HepG2 (cell line): ENCODE measurements at regions of chr12 and their contacts with region 1.

Region 1: DNA sequence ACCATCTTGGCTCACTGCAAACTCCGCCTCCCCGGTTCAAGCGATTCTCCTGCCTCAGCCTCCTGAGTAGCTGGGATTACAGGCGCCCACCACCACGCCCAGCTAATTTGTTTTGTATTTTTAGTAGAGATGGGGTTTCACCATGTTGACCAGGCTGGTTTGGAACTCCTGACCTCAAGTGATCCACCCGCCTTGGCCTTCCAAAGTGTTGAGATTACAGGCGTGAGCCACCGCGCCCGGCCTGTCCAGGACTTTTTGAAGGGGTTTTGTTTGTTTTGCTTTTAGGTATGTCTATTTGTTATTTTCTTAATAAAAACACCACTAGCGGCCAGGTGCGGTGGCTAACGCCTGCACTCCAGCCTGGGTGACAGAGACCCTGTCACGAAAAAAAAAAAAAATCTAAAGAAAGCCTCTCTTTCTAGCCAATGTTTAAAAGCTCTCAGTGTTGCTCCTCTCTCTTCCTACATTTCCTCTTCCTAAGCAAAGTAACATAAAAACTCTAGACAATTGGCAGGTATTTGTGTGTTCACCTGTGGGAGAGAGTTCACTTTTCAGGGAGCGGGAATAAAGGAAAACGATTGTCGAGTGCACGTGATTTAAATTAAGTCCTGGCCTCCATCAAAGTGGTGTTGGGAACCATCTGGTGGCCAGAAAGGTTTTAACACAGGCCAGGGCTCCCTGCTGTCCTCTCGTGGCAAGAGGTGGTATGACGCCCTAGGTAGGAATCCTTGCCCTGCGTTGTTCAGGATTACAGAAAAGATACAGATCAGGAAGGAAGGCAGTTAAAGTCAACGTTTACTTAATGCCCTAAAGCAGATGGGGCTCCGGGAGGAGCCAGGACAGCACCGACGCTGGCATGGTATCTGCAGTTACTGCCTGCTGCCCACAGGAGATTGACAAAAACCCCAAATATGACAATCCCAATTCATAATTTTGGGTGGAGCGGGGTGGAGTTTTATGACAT is 36.2 kb upstream of the ATP23 start:
- DNase-seq: peak; percentile 82
- ATAC-seq: peak; percentile 89
- H3K4me3 ChIP-seq: peak overlapping the region in 1 of 3 experiments; percentile 9; a peak in 2 of 6 replicates
- H3K27ac ChIP-seq: no peak overlapping the region
- H3K4me1 ChIP-seq: peaks cover 26% of the 10 kb centered on the region
- H3K27me3 ChIP-seq: peaks cover 0 to 30% of the 10 kb centered on the region in 2 experiments; a peak in 4 of 5 replicates
- CTCF ChIP-seq: peak; percentile 99
- EP300 ChIP-seq: no peak
- POLR2A ChIP-seq: no peak
- RAD21 ChIP-seq: peak; percentile 98

Region 2: DNA sequence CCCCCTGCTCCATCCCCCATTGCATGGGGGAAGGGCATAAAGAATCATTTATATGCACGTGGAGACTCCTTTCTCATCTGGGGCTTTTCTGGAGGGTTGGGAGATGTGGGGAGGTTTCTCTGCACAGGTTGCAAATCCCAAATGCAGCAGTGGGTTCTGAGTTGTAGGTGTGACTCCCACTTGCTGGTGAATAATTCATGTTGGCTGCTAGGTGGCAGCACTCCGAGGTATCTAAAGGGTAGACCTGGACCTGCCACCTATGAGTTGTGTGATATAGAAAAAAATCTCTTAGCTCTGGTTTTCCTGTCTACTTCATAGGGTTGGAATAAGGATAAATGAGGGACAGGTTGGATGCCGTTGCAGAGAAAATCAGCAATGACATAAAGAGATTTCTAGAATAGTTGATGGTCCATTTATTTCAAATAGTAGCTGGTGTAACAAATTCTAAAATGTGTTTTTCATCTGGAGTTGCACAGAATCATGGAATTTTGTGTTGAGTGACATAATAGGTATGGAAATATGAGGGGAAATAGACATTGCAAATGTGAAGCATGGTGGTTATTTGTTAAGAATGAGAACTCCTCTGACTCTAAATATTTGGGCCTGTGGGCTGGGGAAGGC is 145.7 kb before region 1 on chr12:
- CTCF ChIA-PET with region 1: interaction called, 10 read pairs
- POLR2A ChIA-PET with region 1: no interaction called
- in situ Hi-C with region 1: no loop called
- intact Hi-C with region 1: no loop called
- DNase-seq: peak; percentile 53
- ATAC-seq: peak; percentile 47
- H3K4me3 ChIP-seq: no peak overlapping the region
- H3K27ac ChIP-seq: no peak overlapping the region
- H3K4me1 ChIP-seq: peaks cover 24% of the 10 kb centered on the region
- H3K27me3 ChIP-seq: no peaks in the 10 kb centered on the region
- CTCF ChIP-seq: peak; percentile 60
- EP300 ChIP-seq: no peak
- POLR2A ChIP-seq: no peak
- RAD21 ChIP-seq: no peak

Region 3: GRCh38 chr12:57782608-57783465 is 122.3 kb before region 1 on chr12 and contains the start of gene TSFM:
- CTCF ChIA-PET with region 1: interaction called, 13 read pairs
- POLR2A ChIA-PET with region 1: no interaction called
- in situ Hi-C with region 1: no loop called
- intact Hi-C with region 1: loop called (anchors 1 kb)
- DNase-seq: peak; percentile 85
- ATAC-seq: peak; percentile 89
- H3K4me3 ChIP-seq: peak within 1 kb of the TSS; percentile 95 to 100 (median 99)
- H3K27ac ChIP-seq: peak within 1 kb of the TSS; percentile 55
- H3K4me1 ChIP-seq: peaks cover 17% of the 10 kb centered on the region
- H3K27me3 ChIP-seq: no peaks in the 10 kb centered on the region; a peak in 1 of 5 replicates
- CTCF ChIP-seq: peak; percentile 94
- EP300 ChIP-seq: peak in 1 of 2 experiments; percentile 21; a peak in 1 of 4 replicates
- POLR2A ChIP-seq: peak; percentile 89 to 94
- RAD21 ChIP-seq: peak; percentile 60
- total RNA-seq, gene TSFM: 68.3 and 89.7 TPM in 2 replicates

Region 4: GRCh38 chr12:57803319-57803893 is 101.7 kb before region 1 on chr12:
- CTCF ChIA-PET with region 1: interaction called, 54 read pairs
- POLR2A ChIA-PET with region 1: no interaction called
- in situ Hi-C with region 1: no loop called
- intact Hi-C with region 1: loop called (anchors 1 kb)
- DNase-seq: peak; percentile 23
- ATAC-seq: peak; percentile 89
- H3K4me3 ChIP-seq: no peak overlapping the region
- H3K27ac ChIP-seq: no peak overlapping the region
- H3K4me1 ChIP-seq: no peaks in the 10 kb centered on the region
- H3K27me3 ChIP-seq: no peaks in the 10 kb centered on the region
- CTCF ChIP-seq: peak; percentile 80
- EP300 ChIP-seq: no peak
- POLR2A ChIP-seq: no peak
- RAD21 ChIP-seq: peak; percentile 54

Region 5: DNA sequence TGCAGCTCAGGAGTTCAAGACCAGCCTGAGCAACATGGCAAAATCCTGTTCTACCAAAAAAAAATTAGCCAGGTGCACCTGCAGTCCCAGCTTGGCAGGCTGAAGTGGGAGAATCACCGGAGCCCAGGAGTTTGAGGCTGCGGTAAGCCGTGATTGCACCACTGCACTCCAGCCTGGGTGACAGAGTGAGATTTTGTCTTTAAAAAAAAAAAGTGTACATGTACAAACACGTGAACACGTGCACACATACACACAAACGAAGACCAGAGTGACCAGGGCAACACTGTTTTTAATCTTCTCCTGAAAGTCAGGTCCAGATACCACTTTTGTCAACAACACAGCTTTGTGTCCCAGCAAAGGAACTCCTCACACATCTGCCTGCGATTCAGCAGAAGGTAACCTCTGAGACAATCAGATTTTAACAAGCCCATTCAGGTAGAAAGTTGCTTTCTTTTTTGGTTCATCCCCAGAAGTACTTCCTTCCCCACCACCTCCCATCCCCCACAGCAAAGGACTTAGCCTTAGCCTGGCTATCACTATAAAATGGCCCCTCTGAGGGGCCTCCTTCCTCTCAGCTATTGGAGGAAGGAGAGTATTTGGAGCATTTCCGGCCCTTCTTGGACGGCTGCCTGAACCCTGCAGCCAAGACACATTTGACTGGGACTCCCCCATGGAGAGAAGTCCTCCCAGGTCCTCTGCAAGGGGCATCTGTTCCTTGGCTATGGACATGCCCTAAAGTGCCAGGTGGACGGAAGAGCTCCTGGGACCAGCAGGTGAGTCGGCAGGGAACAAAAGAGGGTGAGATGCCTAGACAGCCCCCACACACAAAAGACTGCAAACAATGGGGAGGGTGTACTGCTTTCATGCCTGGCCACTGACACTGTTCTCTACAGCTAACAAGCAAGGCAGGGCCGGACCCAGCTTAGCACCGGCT is 68.4 kb before region 1 on chr12:
- CTCF ChIA-PET with region 1: interaction called, 165 read pairs
- POLR2A ChIA-PET with region 1: no interaction called
- in situ Hi-C with region 1: no loop called
- intact Hi-C with region 1: loop called (anchors 1 kb)
- DNase-seq: no peak
- ATAC-seq: no peak
- H3K4me3 ChIP-seq: no peak overlapping the region
- H3K27ac ChIP-seq: no peak overlapping the region
- H3K4me1 ChIP-seq: peaks cover 87% of the 10 kb centered on the region
- H3K27me3 ChIP-seq: no peaks in the 10 kb centered on the region
- CTCF ChIP-seq: no peak
- EP300 ChIP-seq: no peak
- POLR2A ChIP-seq: no peak
- RAD21 ChIP-seq: no peak

Region 6: DNA sequence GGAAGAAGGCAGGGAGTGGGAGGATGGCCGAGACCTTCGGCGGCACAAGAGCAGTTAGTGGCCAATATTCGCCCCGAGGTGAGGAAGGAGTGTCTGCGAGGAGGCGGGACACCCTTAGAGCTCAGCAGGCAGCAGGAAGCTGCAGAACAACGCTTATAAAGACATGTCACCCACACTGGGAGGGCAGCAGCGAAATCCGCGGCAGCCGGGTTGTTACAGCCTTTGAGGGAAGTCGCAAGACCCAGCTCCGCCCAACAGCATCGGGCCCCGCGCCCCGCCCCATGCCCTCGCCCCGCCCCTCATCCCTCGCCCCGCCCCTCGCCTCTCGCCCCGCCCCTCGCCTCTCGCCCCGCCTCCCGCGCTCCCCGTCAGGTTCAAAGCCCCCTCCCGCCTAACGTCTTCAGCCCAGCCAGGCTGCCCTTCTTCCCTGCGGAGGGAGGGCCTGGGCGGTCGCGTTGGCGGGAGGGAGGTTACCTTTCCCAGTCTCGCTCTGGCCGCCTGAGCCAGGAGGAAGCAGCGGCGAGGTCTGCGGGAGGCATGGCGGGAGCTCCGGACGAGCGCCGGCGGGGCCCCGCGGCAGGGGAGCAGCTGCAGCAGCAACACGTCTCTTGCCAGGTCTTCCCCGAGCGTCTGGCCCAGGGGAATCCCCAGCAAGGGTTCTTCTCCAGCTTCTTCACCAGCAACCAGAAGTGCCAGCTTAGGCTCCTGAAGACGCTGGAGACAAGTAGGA is 36.2 kb after region 1 on chr12 and contains the start of gene ATP23:
- CTCF ChIA-PET with region 1: no interaction called
- POLR2A ChIA-PET with region 1: no interaction called
- in situ Hi-C with region 1: no loop called
- intact Hi-C with region 1: no loop called
- DNase-seq: peak; percentile 84
- ATAC-seq: peak; percentile 98
- H3K4me3 ChIP-seq: peak within 1 kb of the TSS; percentile 66 to 96 (median 81)
- H3K27ac ChIP-seq: peak within 1 kb of the TSS; percentile 88
- H3K4me1 ChIP-seq: peaks cover 40% of the 10 kb centered on the region
- H3K27me3 ChIP-seq: no peaks in the 10 kb centered on the region
- CTCF ChIP-seq: peak; percentile 22
- EP300 ChIP-seq: no peak
- POLR2A ChIP-seq: peak; percentile 90 to 93
- RAD21 ChIP-seq: no peak
- total RNA-seq, gene ATP23: 12.1 and 13.1 TPM in 2 replicates